Cardiac septum (tissue), 1 donor: ENCODE measurements at regions of chr17 and their contacts with region 1.

Region 1: DNA sequence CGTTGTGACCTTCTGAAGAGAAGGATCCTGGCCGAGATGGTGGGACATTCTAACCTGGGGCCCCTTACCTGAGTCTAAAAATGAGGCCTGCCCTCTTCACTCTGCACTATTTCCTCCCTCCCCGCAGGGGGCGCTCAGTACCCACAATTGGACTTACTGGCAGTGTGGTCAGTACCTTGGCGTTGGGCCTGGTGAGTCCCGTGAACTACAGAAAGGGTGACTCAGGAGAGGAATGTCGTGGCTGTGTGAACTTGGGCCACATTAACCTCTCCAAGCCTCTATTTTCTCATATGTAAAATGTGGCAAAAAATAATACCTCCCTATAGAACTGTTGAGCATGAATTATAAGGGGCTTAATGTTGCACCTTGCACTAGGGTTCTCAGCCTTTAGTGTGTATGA is 3.9 kb downstream of the RSAD1 start:
- DNase-seq: peak; percentile 96

Region 2: DNA sequence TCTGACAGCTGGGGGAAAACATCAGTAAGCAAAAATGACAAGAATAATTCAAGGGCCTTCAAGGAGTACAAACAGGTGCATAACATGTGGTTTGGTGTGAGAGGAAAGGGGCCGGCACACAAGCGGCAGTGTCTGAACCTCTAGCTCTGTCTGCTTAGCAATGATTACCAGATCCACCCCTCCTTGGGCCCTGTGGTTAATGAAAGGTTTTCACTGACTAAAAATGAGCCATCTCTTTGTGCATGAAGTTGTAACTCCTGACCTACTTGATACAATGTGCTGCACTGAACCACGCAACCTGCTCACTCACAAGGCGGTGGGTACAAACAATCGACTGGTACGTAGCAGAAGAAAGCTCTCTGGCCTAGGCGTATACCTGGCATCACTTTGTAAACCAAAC is 733.7 kb before region 1 on chr17:
- intact Hi-C with region 1: no loop called
- DNase-seq: no peak

Region 3: DNA sequence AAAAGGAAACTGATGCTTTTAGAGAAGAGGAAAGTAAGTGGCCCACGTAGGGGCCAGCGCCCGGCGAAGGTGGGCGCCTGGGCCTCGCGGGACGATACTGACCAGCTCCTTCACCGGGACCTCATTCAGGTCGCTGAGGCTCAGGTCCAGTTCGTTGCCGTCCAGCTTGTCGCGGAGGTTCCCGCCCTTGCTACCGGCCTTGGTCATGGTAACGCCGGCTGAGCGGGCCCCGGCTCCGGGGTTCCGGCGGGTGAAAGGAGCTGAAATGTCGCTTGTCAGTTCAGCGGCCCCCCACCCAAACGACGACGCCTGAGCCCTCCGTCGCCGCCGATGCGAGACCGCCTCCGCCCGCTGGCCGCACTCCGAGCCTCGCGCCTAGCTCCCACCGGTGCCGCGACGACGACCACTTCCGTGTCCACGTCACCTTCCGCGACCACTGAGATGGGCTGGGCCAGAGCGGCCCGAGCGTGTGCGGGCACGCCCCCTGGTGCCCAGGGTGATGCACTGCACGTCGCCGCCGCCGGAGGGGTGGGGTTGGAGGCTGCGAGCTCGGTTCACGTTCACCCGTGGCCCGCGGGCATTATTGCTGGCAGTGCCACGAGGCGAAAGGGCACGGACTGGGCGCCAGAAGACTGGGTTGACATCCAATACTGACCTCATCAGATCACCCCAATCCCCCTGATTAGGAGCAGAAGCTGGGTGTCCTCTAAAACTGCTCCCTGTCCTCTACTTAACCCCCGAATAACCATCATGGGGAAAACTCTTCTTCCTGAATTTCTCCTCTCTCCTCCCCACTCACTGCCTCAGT is 85.2 kb before region 1 on chr17 and contains the start of gene LRRC59:
- intact Hi-C with region 1: no loop called
- DNase-seq: peak; percentile 95
- total RNA-seq, gene LRRC59: 32.9 TPM

Region 4: DNA sequence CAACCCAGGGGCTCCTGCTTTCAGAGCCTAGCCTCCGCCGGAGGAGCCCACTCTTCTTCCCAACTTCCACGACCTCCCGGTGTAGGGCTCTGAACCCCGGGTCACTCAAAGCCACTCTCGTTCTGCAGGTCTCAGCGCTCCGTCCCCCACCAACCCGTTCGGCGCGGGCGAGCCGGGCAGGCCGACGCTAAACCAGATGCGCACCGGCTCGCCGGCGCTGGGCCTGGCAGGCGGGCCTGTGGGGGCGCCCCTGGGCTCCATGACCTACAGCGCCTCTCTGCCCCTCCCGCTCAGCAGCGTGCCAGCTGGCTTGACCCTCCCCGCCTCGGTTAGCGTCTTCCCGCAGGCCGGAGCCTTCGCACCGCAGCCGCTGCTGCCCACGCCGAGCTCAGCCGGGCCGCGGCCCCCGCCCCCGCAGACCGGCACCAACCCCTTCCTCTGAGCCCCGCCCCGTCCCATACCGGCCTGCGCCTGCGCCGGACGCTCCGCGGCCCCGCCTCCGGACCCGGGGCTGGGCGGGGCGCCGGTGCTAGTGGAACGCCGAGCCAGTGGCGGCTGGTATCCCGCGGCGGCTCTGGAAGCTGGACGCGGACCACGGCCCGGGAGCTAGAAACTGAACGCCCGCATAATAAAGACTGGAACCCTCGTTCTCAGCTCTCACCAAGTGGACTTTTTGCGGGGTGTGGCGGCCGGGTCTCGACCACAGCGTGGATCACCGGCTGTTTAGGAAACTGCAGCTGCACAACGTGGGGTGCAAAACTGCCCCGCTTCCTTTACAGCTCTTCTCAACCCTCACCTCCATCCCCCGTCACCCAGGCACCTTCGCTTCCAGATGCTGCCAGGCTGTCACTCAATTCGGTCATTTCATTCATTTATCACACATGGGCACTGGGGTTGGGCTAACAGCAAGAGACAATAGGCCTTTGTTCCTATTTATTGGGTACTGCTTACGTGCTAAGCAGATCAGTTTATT is 59.5 kb after region 1 on chr17:
- intact Hi-C with region 1: loop called (anchors 2 kb)
- DNase-seq: peak; percentile 97

Region 5: GRCh38 chr17:50626037-50626574 is 143.6 kb after region 1 on chr17:
- intact Hi-C with region 1: loop called (anchors 5 kb)
- DNase-seq: no peak

Region 6: DNA sequence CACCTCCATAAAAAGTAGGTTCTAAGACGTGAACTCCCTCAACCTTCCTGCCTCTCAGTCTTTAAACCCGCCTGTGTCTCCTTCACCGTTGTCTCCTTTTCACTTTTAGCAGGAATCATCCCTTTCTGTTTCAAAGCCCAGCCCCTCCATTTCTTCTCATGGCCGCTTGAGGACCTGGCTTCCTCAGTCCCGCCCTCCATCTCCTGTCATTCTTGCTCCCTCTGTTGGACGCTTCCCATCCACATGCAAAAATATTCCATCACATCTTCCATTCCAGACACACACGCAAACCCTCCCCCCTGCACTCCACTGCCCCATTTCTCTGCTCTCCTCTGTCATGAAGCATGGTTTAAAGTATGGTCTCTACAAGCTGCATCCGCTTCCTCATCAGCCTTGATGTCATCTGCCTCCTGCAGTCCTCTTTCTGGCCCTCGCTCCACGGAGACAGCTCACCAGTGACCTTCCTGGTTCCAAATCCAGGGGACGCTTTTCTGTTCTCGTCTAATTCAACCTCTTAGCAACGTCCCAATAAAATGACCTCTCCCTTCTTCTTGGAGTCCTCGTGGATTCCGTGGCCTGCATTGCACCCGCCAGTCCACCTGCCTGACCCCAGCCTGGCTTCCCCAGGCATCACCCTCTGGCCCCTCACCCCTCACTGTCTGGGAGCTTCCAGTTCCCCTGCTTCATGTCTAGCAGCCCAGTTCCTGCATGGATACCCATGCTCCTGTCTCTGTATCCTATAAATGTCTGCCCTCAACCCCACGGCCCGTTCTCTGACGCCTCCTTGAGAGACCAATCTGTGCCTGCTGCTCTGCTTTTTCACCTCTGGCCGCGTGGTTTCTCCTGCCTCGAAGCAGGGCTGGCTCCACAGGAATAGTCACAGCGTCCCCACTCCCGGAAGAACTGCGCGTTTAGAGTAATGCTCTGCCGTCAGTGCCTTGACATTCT is 199.0 kb after region 1 on chr17:
- intact Hi-C with region 1: loop called (anchors 10 kb)
- DNase-seq: no peak